Left colon (tissue), 2 donors: ENCODE measurements at regions of chr11 and their contacts with region 1.

Region 1: GRCh38 chr11:119205574-119206510 is at the start of gene CBL:
- DNase-seq: peak; percentile 93 to 98
- ATAC-seq: peak; percentile 91
- total RNA-seq, gene CBL: 12.4 to 14.1 TPM

Region 2: DNA sequence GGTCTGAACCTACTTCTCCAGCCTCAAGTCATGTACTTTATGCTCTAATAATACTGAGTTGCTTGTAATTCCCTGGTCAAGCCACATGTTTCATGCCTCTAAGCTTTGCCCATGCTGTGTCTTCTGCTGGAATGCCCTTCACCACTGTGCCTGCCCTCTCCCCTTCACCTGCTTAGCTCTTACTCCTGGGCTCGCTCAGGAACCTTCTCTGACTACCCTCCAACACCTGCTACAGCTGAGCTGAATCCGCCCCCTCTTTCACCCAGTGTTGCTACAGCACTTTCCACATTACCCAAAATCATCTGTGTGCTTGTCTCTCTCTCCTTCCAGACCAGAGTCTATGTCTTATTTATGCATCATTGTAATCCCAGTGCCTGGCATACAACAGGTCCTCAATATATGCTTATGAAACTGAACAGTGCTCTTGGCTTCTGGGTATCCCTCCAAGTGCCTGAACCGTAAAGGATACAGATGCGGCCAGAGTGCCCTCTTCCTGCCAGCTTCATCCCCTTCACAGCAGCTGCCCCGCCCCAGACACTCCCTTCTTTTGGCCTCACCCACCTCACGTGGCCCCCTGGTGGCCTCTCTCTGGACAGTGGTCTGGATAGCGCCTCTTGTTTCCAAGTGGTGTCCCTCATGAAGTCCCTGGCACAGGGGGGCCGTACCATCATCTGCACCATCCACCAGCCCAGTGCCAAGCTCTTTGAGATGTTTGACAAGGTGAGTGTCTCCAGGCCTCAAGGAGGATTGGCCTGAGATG is 49.9 kb before region 1 on chr11:
- intact Hi-C with region 1: no loop called
- DNase-seq: peak in 1 of 2 donors; percentile 44
- ATAC-seq: peak; percentile 68

Region 3: DNA sequence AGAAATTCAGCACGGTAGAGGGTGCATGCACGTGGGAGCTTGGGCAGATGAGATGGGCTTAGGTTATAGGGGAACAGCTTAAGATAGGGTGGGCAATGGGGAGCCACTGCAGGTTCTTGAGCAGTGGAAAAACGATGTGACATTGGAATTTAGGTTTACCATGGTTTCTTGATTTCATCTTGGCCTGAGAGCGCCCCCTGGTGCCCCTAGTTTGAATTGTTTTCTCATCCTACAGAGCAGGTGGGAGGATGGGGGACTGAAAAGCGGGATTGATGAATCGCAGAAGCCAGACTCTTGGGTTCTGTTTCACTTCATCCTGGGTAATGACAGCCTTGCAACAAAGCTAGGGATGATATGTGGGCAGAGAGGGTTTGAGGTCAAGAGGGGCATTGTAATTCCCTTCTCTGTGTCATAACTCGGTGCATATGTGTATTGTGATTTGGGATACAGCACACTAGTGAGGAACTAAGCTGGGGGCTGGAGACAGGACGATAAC is 117.7 kb after region 1 on chr11:
- intact Hi-C with region 1: loop called in 1 of 2 experiments (anchors 5 kb)
- DNase-seq: peak in 1 of 2 donors; percentile 85
- ATAC-seq: peak; percentile 40